Mammary epithelial cell (primary cell): ENCODE measurements at regions of chr1 and their contacts with region 1.

Region 1: DNA sequence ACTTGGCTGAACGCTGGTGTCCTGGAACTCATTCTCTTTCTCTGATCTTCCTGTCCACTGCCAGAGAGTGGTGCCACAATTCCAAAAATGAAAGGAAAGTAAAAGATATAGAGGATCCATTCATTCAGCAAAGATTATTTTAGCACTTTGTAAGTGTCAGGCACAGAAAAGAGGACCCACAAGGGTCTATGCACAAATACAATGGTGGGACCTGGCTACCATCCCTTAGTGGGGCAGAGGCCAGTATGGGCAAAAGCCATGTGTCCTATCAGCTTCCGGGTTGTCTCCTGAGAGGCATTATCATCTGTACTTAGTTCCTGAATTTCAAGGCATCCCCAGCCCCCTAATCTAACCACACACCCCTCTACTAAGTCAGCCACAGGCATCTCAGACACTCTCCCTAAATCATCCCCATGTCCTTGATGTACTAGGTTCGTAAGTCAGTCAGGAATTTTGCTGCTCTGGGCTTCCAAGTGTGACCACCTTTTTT is 19.0 kb downstream of the SSR2 start:
- DNase-seq: no peak
- H3K4me3 ChIP-seq: no peak overlapping the region
- H3K27ac ChIP-seq: peak overlapping the region; percentile 14
- H3K4me1 ChIP-seq: peaks cover 35% of the 10 kb centered on the region
- H3K27me3 ChIP-seq: no peaks in the 10 kb centered on the region
- CTCF ChIP-seq: no peak

Region 2: DNA sequence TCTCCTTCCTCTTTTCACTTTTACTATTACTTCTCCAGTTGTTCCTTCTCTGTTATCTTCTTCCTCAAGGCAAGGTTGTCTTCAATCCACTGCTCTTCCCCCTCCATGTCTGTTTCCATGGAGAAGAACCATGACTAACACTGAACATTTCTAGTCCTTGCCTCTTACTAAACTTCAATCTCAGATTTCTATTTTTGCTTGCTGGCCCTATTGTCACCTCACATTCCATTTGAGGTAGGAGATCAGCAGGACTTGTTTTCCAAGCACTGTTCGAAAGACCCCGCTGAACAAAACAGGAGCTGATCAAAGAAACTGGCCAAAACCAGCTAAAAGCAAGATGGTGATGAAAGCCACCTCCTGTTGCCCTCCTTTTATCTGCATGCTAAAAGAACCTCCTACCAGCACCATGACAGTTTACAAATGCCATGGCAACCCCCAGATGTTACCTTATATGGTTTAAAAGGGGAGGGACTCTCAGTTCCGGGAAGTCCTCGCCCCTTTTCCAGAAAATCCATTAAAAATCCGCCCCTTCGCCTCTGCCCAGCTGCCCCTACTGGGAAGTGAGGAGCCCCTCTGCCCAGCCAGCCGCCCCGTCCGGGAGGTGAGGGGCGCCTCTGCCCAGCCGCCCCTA is 167.3 kb before region 1 on chr1:
- CTCF ChIA-PET with region 1: no interaction called
- dilution Hi-C with region 1: no loop called
- in situ Hi-C with region 1: no loop called
- intact Hi-C with region 1: loop called (anchors 2 kb)
- DNase-seq: peak; percentile 11
- H3K4me3 ChIP-seq: no peak overlapping the region
- H3K27ac ChIP-seq: no peak overlapping the region
- H3K4me1 ChIP-seq: no peaks in the 10 kb centered on the region
- H3K27me3 ChIP-seq: no peaks in the 10 kb centered on the region
- CTCF ChIP-seq: no peak

Region 3: DNA sequence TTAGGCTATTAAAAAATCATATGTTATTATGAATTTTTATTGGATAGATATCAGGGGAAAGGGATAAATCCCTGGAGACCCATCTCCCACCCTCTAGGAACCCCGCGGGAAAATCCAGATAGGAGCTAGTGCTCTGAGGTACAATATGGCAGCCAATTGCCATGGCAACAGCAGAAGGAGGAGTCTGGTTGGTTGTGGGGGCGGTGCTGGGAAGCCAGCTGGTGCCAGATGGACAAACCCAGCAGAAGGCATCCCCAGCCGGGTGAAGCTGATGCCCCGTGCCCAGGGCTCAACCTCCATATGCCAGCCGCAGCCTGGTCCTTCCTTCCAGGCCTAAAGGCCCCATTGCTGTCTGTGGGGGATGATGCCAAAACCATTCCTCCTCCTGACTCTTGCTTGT is 405.6 kb after region 1 on chr1:
- CTCF ChIA-PET with region 1: no interaction called
- dilution Hi-C with region 1: no loop called
- in situ Hi-C with region 1: no loop called
- intact Hi-C with region 1: no loop called
- DNase-seq: no peak
- H3K4me3 ChIP-seq: no peak overlapping the region
- H3K27ac ChIP-seq: no peak overlapping the region
- H3K4me1 ChIP-seq: no peaks in the 10 kb centered on the region
- H3K27me3 ChIP-seq: peaks cover 5% of the 10 kb centered on the region
- CTCF ChIP-seq: no peak